Cardiac septum (tissue), 1 donor: ENCODE measurements at regions of chr18 and their contacts with region 1.

Region 1: GRCh38 chr18:27627927-27628326 is 442.8 kb upstream of the CHST9 start:
- DNase-seq: no peak

Region 2: GRCh38 chr18:27674411-27674810 is 46.5 kb after region 1 on chr18:
- intact Hi-C with region 1: no loop called
- DNase-seq: no peak

Region 3: DNA sequence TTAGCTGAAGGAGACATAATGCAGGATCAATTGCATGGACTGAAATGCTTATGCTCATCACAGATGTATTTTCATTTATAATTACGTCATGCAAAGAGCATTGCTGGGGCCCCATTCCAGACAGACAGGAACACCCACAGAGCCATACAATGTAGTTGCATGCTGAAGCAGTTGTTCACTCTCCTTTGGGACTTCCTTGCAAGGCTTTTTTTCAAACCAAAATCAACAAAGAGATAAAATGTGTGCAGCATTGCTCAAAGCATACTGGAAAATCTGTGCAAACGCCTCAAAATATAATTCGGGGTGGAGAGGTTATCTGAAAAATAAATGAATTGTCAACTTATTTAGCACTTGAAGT is 85.8 kb after region 1 on chr18:
- intact Hi-C with region 1: loop called (anchors 10 kb)
- DNase-seq: no peak